ENCODE measurements at regions of chr2 and their contacts with region 1.

Region 1: GRCh38 chr2:47339745-47340541 is 63.0 kb upstream of the MSH2 start:
- DNase-seq: peak in 2 of 6 donors; percentile 19 to 26
- ATAC-seq: peak in 3 of 4 donors; percentile 22 to 55 (median 39)
- H3K4me3 ChIP-seq: no peak overlapping the region
- H3K27ac ChIP-seq: peak overlapping the region; percentile 8 to 74 (median 48)
- H3K4me1 ChIP-seq: peaks cover 0 to 22% (median 3%) of the 10 kb centered on the region in 3 donors
- H3K27me3 ChIP-seq: no peaks in the 10 kb centered on the region
- CTCF ChIP-seq: no peak

Region 2: DNA sequence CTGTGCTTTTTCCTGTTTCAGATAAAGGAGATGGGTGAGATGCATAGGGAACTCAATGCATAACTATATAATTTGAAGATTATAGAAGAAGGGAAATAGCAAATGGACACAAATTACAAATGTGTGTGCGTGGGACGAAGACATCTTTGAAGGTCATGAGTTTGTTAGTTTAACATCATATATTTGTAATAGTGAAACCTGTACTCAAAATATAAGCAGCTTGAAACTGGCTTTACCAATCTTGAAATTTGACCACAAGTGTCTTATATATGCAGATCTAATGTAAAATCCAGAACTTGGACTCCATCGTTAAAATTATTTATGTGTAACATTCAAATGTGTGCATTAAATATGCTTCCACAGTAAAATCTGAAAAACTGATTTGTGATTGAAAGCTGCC is 46.6 kb after region 1 on chr2:
- intact Hi-C with region 1: loop called in 1 of 3 experiments (anchors 5 kb)
- DNase-seq: no peak
- ATAC-seq: no peak
- H3K4me3 ChIP-seq: no peak overlapping the region
- H3K27ac ChIP-seq: no peak overlapping the region
- H3K4me1 ChIP-seq: no peaks in the 10 kb centered on the region
- H3K27me3 ChIP-seq: no peaks in the 10 kb centered on the region
- CTCF ChIP-seq: no peak

Region 3: DNA sequence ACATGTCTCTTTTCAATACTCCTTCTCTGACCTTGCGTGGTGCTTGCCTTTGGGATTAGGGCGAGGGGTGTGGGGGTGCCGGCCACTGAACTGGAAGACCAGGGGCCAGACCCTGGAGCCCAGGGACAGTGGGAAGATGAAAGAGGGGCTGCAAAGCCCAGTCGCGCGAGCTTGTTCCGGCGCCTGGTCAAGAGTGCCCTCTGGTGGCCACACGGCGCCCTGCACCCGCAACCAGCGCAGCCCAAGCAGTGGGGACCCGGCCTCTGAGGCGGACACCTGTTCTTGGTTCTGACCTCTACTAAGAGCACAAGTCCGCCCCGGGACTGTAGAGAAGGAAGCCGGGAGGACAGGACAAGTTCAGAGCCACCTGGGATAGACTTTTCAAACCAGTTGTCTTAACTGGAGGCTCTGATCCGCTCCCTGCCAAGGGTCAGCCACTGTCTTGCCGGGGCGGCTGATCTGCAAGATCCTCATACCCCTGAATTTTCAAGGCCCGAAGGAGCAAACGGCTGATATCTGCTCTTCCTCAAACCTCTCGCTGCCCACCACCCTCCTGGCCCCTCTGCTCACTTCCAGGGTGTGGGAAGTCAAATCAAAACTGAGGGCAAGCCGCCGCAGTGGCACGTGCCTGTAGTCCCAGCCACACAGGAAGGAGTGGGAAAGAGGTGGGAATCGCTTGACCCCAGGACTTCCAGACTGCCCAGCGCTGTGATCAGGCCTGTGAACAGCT is 428.1 kb after region 1 on chr2:
- intact Hi-C with region 1: loop called in 1 of 3 experiments (anchors 10 kb)
- DNase-seq: peak; percentile 37 to 95 (median 76)
- ATAC-seq: peak; percentile 84 to 99 (median 96)
- H3K4me3 ChIP-seq: no peak overlapping the region
- H3K27ac ChIP-seq: no peak overlapping the region
- H3K4me1 ChIP-seq: no peaks in the 10 kb centered on the region
- H3K27me3 ChIP-seq: no peaks in the 10 kb centered on the region
- CTCF ChIP-seq: peak; percentile 97 to 99 (median 98)